ENCODE measurements at regions of chr10 and their contacts with region 1.

Region 1: DNA sequence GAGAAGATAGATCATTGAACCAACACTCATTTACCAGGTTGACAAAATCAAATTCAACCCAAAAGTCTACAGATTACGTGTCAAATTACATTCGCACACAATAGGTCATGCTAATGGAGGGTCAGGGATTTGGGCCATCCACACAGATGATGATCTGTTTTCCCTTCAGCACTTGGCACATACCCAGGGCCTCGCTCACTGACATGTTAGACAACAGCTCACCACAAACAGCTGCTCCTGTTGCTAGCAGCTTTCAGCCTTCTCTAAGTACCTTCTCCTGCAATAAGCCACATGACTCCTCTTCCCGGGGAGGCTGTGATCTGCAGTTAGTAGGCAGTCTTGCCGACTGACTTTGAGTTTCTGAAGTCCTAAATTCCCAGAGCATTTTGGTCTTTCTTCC is 18.4 kb downstream of the NKX2-3 start:
- DNase-seq: no peak
- ATAC-seq: no peak
- H3K4me3 ChIP-seq: no peak overlapping the region
- H3K27ac ChIP-seq: no peak overlapping the region
- H3K4me1 ChIP-seq: no peaks in the 10 kb centered on the region
- H3K27me3 ChIP-seq: peaks cover 6 to 29% of the 10 kb centered on the region in 2 experiments
- CTCF ChIP-seq: no peak
- EP300 ChIP-seq: no peak
- POLR2A ChIP-seq: no peak
- RAD21 ChIP-seq: no peak

Region 2: GRCh38 chr10:99234041-99234790 is 316.9 kb before region 1 on chr10:
- CTCF ChIA-PET with region 1: no interaction called
- POLR2A ChIA-PET with region 1: no interaction called
- in situ Hi-C with region 1: no loop called
- intact Hi-C with region 1: no loop called
- DNase-seq: peak in 2 of 4 experiments; percentile 7 to 10
- ATAC-seq: no peak
- H3K4me3 ChIP-seq: no peak overlapping the region
- H3K27ac ChIP-seq: no peak overlapping the region
- H3K4me1 ChIP-seq: peaks cover 0 to 12% of the 10 kb centered on the region in 2 experiments; a peak in 2 of 5 replicates
- H3K27me3 ChIP-seq: peaks cover 14 to 45% of the 10 kb centered on the region in 2 experiments; a peak in 3 of 5 replicates
- CTCF ChIP-seq: no peak
- EP300 ChIP-seq: no peak
- POLR2A ChIP-seq: no peak
- RAD21 ChIP-seq: no peak

Region 3: GRCh38 chr10:99395750-99396445 is 155.3 kb before region 1 on chr10:
- CTCF ChIA-PET with region 1: no interaction called
- POLR2A ChIA-PET with region 1: no interaction called
- in situ Hi-C with region 1: no loop called
- intact Hi-C with region 1: loop called (anchors 10 kb)
- DNase-seq: no peak
- ATAC-seq: no peak; the same call in 1 of the 3 replicates
- H3K4me3 ChIP-seq: no peak overlapping the region
- H3K27ac ChIP-seq: no peak overlapping the region
- H3K4me1 ChIP-seq: no peaks in the 10 kb centered on the region; a peak in 2 of 5 replicates
- H3K27me3 ChIP-seq: peaks cover 0 to 7% of the 10 kb centered on the region in 2 experiments; a peak in 1 of 5 replicates
- CTCF ChIP-seq: no peak
- EP300 ChIP-seq: no peak
- POLR2A ChIP-seq: no peak
- RAD21 ChIP-seq: no peak

Region 4: GRCh38 chr10:99484603-99485581 is 66.3 kb before region 1 on chr10:
- CTCF ChIA-PET with region 1: no interaction called
- POLR2A ChIA-PET with region 1: no interaction called
- in situ Hi-C with region 1: no loop called
- intact Hi-C with region 1: no loop called
- DNase-seq: peak; percentile 14 to 33 (median 26)
- ATAC-seq: peak; percentile 69; the same call in 2 of the 3 replicates
- H3K4me3 ChIP-seq: no peak overlapping the region
- H3K27ac ChIP-seq: no peak overlapping the region
- H3K4me1 ChIP-seq: no peaks in the 10 kb centered on the region
- H3K27me3 ChIP-seq: peaks cover 0 to 10% of the 10 kb centered on the region in 2 experiments; a peak in 3 of 5 replicates
- CTCF ChIP-seq: peak; percentile 41 to 44 (median 42)
- EP300 ChIP-seq: no peak
- POLR2A ChIP-seq: no peak
- RAD21 ChIP-seq: peak in 1 of 2 experiments; percentile 29; a peak in 1 of 4 replicates

Measured in K562 (cell line).